Natural killer cell (primary cell): ENCODE measurements at regions of chr6 and their contacts with region 1.

Region 1: DNA sequence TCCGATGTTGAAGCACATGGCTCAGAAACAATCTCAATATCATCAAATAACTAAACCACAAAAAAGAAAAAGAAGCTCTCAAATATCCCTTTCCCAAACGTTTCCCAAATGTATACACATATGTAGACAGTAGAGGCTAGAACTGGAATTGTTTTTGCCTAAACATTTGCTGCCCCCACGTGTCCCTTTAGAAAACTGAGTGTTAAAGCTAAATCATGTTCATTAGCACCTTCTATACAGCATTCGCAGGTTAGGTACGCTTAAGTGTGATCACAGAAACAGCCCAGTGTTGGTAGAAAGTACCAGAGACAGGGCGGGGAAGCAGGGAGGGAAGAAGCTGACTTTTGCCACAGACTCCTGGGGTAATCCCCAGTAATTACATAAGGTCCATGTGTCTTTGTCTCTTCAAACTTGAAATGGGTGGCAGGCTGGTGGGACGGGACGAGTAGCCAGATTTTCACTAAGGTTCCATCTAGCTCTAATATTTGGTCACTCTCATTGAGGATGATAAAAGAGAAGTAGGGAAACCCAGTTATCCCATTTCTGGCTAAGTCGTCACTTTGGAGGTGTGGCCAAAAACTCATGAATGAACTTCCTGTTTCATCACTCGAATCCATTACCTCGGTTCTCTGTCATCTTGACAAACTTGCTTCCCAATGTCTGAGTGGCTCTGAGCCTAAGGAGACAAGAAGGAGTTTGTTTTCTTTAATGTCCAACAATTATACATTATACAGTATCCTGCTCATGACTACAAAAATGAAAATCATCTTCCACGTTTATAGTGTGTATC is 15.0 kb upstream of the TFAP2A start:
- DNase-seq: peak in 1 of 2 donors; percentile 43
- ATAC-seq: peak in 1 of 3 donors; percentile 28
- H3K4me3 ChIP-seq: no peak overlapping the region
- H3K4me3 Mint-ChIP-seq: no peak overlapping the region
- H3K27ac ChIP-seq: no peak overlapping the region
- H3K27ac Mint-ChIP-seq: no peak overlapping the region
- H3K4me1 ChIP-seq: peaks cover 11% of the 10 kb centered on the region
- H3K4me1 Mint-ChIP-seq: peaks cover 0 to 4% of the 10 kb centered on the region in 2 donors
- H3K27me3 ChIP-seq: peaks cover 26% of the 10 kb centered on the region
- H3K27me3 Mint-ChIP-seq: peaks cover 31 to 39% of the 10 kb centered on the region in 2 donors
- CTCF ChIP-seq: peak; percentile 17

Region 2: DNA sequence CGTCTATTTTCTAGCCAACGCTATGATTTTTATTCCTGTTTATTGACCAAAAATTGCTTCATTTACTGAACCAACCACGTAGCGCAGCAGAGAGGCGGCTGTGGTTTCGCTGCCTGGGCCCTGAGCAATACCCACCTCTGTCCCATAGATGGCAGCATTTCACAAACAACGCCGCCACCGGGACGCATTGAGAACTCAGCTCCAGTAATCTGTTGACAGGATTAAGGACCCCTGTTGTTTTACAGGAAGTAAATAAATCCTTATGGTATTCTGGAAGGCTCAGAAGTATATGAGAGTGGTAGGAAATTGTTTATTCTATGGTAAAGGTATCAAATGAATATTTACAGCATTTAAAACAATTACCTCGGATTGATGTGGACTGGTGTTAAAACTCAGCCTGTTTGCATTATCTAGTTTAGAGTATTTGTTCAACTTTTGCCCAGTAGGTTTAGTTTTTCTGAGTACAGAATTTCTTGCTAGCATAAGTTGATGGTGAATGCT is 1446.6 kb before region 1 on chr6:
- intact Hi-C with region 1: loop called (anchors 5 kb)
- DNase-seq: peak; percentile 15 to 63
- ATAC-seq: peak; percentile 68 to 88 (median 74)
- H3K4me3 ChIP-seq: no peak overlapping the region
- H3K4me3 Mint-ChIP-seq: no peak overlapping the region
- H3K27ac ChIP-seq: no peak overlapping the region
- H3K27ac Mint-ChIP-seq: no peak overlapping the region
- H3K4me1 ChIP-seq: no peaks in the 10 kb centered on the region
- H3K4me1 Mint-ChIP-seq: peaks cover 0 to 6% of the 10 kb centered on the region in 2 donors
- H3K27me3 ChIP-seq: no peaks in the 10 kb centered on the region
- H3K27me3 Mint-ChIP-seq: no peaks in the 10 kb centered on the region
- CTCF ChIP-seq: peak; percentile 67

Region 3: GRCh38 chr6:10210052-10210451 is 219.8 kb before region 1 on chr6:
- intact Hi-C with region 1: no loop called
- DNase-seq: no peak
- ATAC-seq: no peak
- H3K4me3 ChIP-seq: no peak overlapping the region
- H3K4me3 Mint-ChIP-seq: no peak overlapping the region
- H3K27ac ChIP-seq: no peak overlapping the region
- H3K27ac Mint-ChIP-seq: no peak overlapping the region
- H3K4me1 ChIP-seq: no peaks in the 10 kb centered on the region
- H3K4me1 Mint-ChIP-seq: no peaks in the 10 kb centered on the region
- H3K27me3 ChIP-seq: no peaks in the 10 kb centered on the region
- H3K27me3 Mint-ChIP-seq: no peaks in the 10 kb centered on the region
- CTCF ChIP-seq: no peak

Region 4: DNA sequence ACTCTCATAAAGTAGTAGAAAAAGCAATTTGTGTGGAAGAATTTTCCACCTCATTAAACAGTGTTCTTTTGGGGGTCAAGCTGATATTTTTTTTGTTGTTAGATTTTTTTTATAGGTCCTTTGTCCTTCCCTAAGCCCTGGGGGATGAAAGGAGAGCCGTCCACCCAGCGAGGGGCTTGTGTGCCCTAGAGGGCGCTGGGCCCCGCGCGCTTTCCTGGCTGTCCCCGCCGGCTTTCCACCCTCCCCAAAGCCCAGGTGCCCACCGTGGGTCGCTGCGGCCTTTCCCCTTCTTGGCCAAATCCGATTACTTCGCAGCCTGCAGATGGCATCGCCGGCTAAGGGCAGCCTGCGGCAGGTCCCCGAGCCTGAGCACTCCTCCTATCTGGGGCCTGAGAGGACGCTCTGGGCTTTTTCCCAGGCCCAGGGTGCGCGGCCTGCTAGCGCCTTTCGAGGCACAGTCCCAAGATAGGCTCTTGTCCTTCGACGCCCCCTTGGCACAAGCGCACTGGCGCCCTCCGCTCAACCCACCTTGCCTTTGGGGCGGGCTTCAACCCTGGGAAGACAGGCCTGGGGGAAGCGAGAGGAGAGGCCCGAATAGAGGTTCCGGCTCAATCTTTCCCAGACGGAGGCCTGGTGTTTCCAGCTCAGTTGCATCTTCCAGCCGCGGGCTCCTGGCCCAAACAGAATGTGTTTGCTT is 48.6 kb before region 1 on chr6:
- intact Hi-C with region 1: no loop called
- DNase-seq: no peak
- ATAC-seq: no peak
- H3K4me3 ChIP-seq: no peak overlapping the region
- H3K4me3 Mint-ChIP-seq: no peak overlapping the region
- H3K27ac ChIP-seq: no peak overlapping the region
- H3K27ac Mint-ChIP-seq: no peak overlapping the region
- H3K4me1 ChIP-seq: peaks cover 3% of the 10 kb centered on the region
- H3K4me1 Mint-ChIP-seq: peaks cover 0 to 6% of the 10 kb centered on the region in 2 donors
- H3K27me3 ChIP-seq: peaks cover 56% of the 10 kb centered on the region
- H3K27me3 Mint-ChIP-seq: peaks cover 58 to 64% of the 10 kb centered on the region in 2 donors
- CTCF ChIP-seq: no peak

Region 5: DNA sequence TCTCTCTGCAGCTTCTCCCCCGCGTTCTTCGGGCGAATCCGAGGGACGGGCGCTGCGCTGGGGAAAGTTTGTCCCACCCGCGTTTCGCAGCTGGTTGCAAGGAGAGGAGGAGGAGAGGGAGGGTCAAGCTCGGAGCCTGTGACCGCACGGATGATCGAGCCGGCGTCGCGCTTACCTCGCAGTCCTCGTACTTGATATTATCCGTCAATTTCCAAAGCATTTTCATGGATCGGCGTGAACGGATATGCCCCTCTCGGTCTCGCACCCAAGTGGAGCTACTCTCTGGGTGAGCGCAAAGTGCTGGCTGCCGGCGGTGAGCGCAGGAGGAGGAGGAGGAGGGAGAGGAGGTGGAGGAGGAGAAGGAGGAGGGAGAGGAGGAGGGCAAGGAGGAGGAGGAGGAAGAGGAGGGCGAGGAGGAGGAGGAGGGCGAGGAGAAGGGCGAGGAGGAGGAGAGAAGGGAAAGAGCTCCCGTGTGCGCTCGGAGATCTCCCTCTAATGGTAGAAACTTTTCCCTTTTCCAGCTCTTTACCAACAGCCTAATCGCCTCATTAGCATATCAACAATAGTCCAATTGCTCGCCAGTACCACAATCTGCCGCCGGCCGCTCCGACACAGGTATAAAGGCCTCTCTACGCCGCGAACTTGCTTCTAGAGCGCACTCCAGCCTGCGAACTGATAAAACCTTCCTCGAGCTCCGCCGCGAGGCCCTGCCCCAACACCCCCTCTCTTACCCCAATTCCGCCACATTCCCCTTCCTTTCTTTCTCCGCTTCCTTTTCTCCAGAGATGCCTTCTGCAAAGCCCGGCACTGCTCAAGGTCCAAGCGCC is 14.9 kb before region 1 on chr6 and contains the start of gene TFAP2A:
- intact Hi-C with region 1: no loop called
- DNase-seq: no peak
- ATAC-seq: no peak
- H3K4me3 ChIP-seq: no peak within 1 kb of the TSS
- H3K4me3 Mint-ChIP-seq: peak within 1 kb of the TSS; percentile 86
- H3K27ac ChIP-seq: no peak within 1 kb of the TSS
- H3K27ac Mint-ChIP-seq: peak within 1 kb of the TSS in 1 of 2 donors; percentile 78
- H3K4me1 ChIP-seq: peaks cover 43% of the 10 kb centered on the region
- H3K4me1 Mint-ChIP-seq: peaks cover 42 to 50% of the 10 kb centered on the region in 2 donors
- H3K27me3 ChIP-seq: peaks cover 81% of the 10 kb centered on the region
- H3K27me3 Mint-ChIP-seq: peaks cover 73 to 74% of the 10 kb centered on the region in 2 donors
- CTCF ChIP-seq: no peak
- total RNA-seq, gene TFAP2A: not detected

Region 6: DNA sequence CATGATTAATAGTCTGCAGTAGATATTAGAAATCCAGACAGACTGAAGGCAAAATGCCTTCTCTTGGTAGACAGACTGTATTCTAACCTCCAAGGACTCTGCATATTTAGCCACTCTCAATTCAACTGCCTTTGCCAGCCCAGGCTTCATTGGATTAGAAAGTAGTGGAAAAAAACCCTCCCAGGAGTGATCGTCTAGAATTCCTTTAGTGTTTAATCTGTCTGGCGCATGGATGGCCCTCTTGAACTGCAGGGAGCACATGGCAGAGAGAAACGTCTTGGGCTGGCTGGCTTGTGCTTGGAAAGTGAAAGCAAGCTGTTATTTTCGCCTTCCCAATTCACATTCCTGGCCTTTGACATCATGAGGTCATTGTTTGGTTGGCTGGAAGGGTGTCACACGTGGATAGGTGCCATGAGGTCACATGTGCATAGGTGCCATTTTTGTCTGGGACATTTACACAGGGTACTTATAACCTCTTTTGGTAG is 833.5 kb after region 1 on chr6:
- intact Hi-C with region 1: no loop called
- DNase-seq: peak in 1 of 2 donors; percentile 20
- ATAC-seq: peak in 1 of 3 donors; percentile 28
- H3K4me3 ChIP-seq: no peak overlapping the region
- H3K4me3 Mint-ChIP-seq: peak overlapping the region; percentile 45
- H3K27ac ChIP-seq: peak overlapping the region; percentile 1
- H3K27ac Mint-ChIP-seq: peak overlapping the region; percentile 23 to 93
- H3K4me1 ChIP-seq: peaks cover 33% of the 10 kb centered on the region
- H3K4me1 Mint-ChIP-seq: peaks cover 66 to 73% of the 10 kb centered on the region in 2 donors
- H3K27me3 ChIP-seq: no peaks in the 10 kb centered on the region
- H3K27me3 Mint-ChIP-seq: no peaks in the 10 kb centered on the region
- CTCF ChIP-seq: no peak